Mammary epithelial cell (primary cell): ENCODE measurements at regions of chr9 and their contacts with region 1.

Region 1: GRCh38 chr9:35657546-35658136 is at the start of gene RMRP:
- DNase-seq: peak; percentile 99
- H3K4me3 ChIP-seq: peak within 1 kb of the TSS; percentile 88 to 95 (median 94)
- H3K27ac ChIP-seq: peak within 1 kb of the TSS; percentile 100
- H3K4me1 ChIP-seq: peaks cover 26% of the 10 kb centered on the region
- H3K27me3 ChIP-seq: no peaks in the 10 kb centered on the region
- CTCF ChIP-seq: peak; percentile 2 to 25
- total RNA-seq, gene RMRP: 16,267 to 114,057 TPM

Region 2: DNA sequence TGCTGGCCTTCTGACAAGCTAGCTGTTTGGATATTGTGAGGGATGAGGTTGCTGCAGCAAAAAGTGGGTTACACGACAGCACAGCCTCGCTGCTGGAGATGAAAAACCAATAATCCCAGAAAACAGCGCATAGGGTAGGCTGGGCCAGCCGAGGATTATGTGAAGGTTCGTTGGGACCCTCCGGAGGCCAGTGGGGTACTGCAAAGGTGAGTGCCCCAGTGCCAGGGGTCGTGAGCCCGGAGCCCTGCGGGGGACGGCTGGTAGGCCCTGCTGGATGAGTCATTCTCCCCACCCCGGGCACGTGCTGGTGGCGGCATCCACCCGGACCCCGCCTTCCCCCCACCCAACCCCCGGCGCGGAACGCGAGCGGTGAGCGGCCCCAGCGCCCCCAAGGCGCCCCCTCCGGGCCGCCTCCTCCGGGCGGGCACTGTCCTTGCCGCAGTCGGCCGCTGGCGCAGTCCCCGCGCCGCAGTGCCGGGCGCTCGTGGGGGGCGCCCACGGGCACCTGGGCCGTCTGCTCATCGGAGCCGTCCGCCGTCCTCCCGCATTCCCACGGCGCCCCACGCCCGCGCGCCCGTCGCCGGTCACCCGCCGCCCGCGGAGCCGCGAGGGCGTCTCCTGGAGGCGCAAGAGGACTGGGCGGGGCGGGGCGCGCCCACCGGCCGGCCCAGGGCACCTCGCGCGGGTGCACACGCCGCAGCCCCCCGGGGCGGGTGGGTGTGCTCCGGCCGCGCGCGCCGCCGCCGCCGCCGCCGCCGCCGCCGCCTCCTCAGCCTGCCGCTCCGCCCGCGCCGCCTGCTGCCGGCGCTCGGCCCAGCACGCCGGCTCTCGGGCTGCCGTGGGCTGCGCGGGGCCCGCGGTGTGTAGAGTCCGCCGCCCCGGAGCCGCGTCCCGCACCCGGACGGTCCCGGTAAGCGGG is 699.9 kb before region 1 on chr9 and contains the start of gene PHF24:
- CTCF ChIA-PET with region 1: no interaction called
- dilution Hi-C with region 1: no loop called
- in situ Hi-C with region 1: no loop called
- intact Hi-C with region 1: no loop called
- DNase-seq: no peak
- H3K4me3 ChIP-seq: peak within 1 kb of the TSS in 2 of 3 experiments; percentile 37 to 40
- H3K27ac ChIP-seq: no peak within 1 kb of the TSS
- H3K4me1 ChIP-seq: peaks cover 20% of the 10 kb centered on the region
- H3K27me3 ChIP-seq: peaks cover 5% of the 10 kb centered on the region
- CTCF ChIP-seq: no peak
- total RNA-seq, gene PHF24: under 0.01 to 0.24 TPM

Region 3: GRCh38 chr9:35563791-35564197 is 93.8 kb before region 1 on chr9:
- CTCF ChIA-PET with region 1: no interaction called
- dilution Hi-C with region 1: no loop called
- in situ Hi-C with region 1: no loop called
- intact Hi-C with region 1: no loop called
- DNase-seq: no peak
- H3K4me3 ChIP-seq: no peak overlapping the region
- H3K27ac ChIP-seq: no peak overlapping the region
- H3K4me1 ChIP-seq: no peaks in the 10 kb centered on the region
- H3K27me3 ChIP-seq: no peaks in the 10 kb centered on the region
- CTCF ChIP-seq: no peak

Region 4: GRCh38 chr9:35603987-35604577 is 53.6 kb before region 1 on chr9:
- CTCF ChIA-PET with region 1: no interaction called
- dilution Hi-C with region 1: no loop called
- in situ Hi-C with region 1: no loop called
- intact Hi-C with region 1: loop called (anchors 1 kb)
- DNase-seq: peak; percentile 99
- H3K4me3 ChIP-seq: peak overlapping the region; percentile 60 to 67 (median 64)
- H3K27ac ChIP-seq: peak overlapping the region; percentile 68
- H3K4me1 ChIP-seq: peaks cover 28% of the 10 kb centered on the region
- H3K27me3 ChIP-seq: no peaks in the 10 kb centered on the region
- CTCF ChIP-seq: peak; percentile 82 to 83

Region 5: GRCh38 chr9:35639631-35640030 is 18.0 kb before region 1 on chr9:
- CTCF ChIA-PET with region 1: no interaction called
- dilution Hi-C with region 1: no loop called
- in situ Hi-C with region 1: no loop called
- intact Hi-C with region 1: no loop called
- DNase-seq: no peak
- H3K4me3 ChIP-seq: no peak overlapping the region
- H3K27ac ChIP-seq: no peak overlapping the region
- H3K4me1 ChIP-seq: no peaks in the 10 kb centered on the region
- H3K27me3 ChIP-seq: no peaks in the 10 kb centered on the region
- CTCF ChIP-seq: no peak

Region 6: DNA sequence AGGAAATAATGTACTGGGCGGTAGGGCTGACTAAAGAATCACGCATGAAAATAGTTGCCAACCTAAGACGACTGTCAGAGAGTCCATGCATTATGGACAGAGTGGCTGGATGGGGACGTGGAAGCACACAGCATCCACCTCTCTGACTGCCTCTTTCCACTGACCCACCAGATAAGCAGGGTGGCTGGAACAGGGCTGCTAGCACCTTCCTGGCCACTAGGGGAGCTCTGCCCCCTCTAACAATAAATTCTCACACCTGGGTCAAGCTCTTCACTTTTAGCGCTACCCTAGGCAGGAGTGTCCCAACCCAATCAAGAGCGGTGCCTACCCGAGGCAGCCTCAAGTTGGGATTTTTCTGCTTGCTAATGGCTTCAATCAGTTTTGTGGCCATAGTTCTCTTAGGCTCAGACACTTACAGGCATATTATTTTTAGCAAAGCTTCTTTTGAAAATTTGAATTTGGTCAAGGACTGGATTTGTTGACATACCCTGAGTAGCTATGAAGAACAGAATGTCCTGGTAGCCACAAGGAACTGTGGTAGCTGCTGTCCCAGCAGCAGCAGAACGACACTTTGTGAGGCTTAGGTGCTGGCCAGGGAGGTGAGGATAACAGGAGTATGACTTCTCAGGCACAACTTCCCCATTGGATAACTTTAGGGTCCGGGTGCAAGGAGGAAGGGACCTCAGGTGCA is 39.0 kb after region 1 on chr9:
- CTCF ChIA-PET with region 1: interaction called, 4 read pairs
- dilution Hi-C with region 1: no loop called
- in situ Hi-C with region 1: no loop called
- intact Hi-C with region 1: loop called (anchors 2 kb)
- DNase-seq: peak; percentile 42
- H3K4me3 ChIP-seq: no peak overlapping the region
- H3K27ac ChIP-seq: no peak overlapping the region
- H3K4me1 ChIP-seq: no peaks in the 10 kb centered on the region
- H3K27me3 ChIP-seq: no peaks in the 10 kb centered on the region
- CTCF ChIP-seq: peak; percentile 89 to 94